Colonic mucosa (tissue), 4 donors: ENCODE measurements at regions of chr2 and their contacts with region 1.

Region 1: DNA sequence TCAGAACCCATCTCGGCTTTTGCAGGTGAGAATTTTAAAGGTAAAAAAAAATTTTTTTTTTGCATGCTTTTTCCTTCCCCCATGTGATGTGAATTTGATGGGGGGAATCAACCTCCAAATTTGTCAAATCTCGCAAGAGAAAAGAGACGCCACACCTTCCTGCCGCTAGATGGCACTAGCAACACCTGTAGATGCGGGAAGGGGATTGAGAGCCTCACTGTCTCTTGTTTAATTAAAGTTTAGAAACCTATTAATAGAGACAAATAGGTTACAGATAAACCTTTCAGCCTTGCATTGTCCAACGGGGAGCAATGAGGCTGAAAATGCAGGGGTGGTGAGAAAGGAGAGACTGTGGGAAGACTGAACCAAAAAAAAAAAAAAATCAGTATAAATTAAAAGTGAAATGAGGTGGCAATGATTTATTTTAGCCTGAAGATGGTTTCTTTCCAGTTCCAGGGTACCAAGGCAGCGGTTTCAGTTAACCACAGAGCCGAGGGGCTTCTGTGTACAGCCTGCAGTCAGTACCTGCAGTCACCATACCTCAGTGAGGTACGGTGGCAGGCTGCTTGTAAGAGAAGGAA is 84.6 kb downstream of the NRP2 start:
- DNase-seq: peak; percentile 70
- H3K4me3 ChIP-seq: no peak overlapping the region
- H3K27ac ChIP-seq: no peak overlapping the region
- H3K4me1 ChIP-seq: peaks cover 7% of the 10 kb centered on the region
- H3K27me3 ChIP-seq: no peaks in the 10 kb centered on the region
- CTCF ChIP-seq: peak; percentile 88

Region 2: DNA sequence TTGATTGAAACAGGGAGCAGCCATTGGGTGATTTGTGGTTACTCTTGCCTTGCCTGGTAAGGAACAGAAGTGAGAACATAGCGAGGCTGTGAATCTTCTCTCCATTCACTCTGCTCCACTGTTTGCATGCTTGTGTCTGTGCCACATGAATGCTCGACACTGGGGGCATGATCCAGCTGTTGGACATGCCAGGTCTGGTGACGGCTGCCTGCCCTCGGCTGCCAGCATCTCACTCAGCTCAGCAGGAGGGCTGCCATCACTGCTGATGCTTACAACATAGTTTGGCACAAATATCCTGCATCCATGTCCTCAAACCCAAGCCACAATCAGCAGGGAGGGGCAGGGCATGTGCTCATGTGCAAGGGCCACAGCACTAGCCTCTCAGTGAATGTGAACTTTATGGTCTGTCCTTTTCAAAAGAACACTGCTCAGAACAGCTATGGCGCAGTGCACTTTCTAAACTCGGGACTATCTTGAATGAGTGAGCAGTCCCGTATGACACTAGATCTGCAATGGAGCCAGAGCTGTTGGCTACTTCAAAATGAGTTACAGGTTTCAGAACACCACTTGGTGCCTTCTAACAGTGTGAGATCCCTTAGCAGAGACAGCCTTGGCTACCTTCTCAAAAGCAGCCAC is 41.7 kb after region 1 on chr2:
- intact Hi-C with region 1: loop called (anchors 2 kb)
- DNase-seq: no peak
- H3K4me3 ChIP-seq: no peak overlapping the region
- H3K27ac ChIP-seq: no peak overlapping the region
- H3K4me1 ChIP-seq: no peaks in the 10 kb centered on the region
- H3K27me3 ChIP-seq: no peaks in the 10 kb centered on the region
- CTCF ChIP-seq: no peak

Region 3: GRCh38 chr2:205885492-205886099 is 118.7 kb after region 1 on chr2:
- intact Hi-C with region 1: loop called (anchors 5 kb)
- DNase-seq: peak; percentile 95
- H3K4me3 ChIP-seq: no peak overlapping the region
- H3K27ac ChIP-seq: no peak overlapping the region
- H3K4me1 ChIP-seq: no peaks in the 10 kb centered on the region
- H3K27me3 ChIP-seq: no peaks in the 10 kb centered on the region
- CTCF ChIP-seq: peak; percentile 77

Region 4: DNA sequence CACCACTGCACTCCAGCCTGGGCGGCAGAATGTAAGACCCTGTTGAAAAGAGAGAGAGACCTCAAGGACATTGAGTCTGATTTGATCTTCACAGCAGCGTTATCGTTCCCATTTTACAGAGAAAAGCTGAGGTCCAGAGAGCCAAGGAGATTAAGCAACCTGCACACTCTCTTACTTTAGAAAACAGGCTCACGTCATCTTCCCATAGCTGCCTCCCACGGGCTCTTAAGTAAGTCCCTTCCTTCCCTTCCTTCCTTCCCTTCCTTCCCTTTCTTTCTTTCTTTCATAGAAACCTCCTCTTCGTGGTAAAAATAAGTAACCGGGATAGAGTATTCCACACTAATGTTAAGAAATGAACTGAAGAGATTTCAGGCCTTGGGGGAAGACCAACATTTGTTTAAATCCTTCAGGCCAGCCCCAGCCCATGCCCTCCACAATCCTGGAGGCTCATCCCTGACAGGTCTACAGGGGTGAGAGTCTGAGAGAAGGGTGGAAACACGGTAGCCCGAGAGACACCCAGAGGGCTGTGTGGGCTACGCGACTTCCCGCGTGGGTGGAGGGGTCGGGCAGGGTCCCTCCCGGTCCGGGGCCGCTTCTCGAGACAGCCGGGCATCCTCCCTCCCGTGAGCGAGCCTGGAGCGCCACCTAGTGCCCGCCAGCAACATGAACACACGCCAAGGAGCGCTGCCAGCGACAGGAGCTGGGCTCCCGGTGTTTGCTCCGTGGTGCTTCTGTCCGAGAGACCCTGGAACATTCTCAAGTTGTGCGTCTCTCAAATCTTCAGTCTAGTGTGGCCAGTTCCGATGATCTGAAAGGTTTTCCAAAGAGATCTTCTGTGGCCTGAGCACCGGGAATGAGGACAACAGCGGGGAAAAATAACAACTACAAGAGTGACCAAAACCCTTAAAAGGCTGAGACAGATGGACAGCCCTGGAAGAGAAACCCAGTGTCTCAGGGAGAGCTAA is 158.8 kb after region 1 on chr2:
- intact Hi-C with region 1: loop called (anchors 10 kb)
- DNase-seq: peak; percentile 83
- H3K4me3 ChIP-seq: no peak overlapping the region
- H3K27ac ChIP-seq: no peak overlapping the region
- H3K4me1 ChIP-seq: peaks cover 4% of the 10 kb centered on the region
- H3K27me3 ChIP-seq: no peaks in the 10 kb centered on the region
- CTCF ChIP-seq: peak; percentile 91

Region 5: DNA sequence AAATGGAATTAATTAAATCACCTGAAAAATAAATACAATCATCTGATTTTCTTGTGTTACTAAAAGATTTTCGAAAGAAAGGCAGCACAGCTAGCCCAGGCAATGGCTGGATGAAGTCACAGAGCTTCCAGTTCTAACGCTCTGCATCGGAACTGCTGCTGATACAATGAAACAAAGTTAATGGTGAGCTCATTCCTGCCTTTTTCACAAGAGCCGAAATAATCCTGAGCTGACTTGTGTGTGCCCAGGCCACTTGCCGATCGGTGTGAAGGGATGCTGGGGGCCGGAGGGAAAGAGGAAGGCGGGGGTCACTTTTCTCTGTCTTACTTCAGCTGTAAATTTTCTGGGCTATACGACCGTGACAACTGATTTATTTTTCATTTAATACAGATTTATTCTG is 169.6 kb after region 1 on chr2:
- intact Hi-C with region 1: no loop called
- DNase-seq: no peak
- H3K4me3 ChIP-seq: no peak overlapping the region
- H3K27ac ChIP-seq: no peak overlapping the region
- H3K4me1 ChIP-seq: no peaks in the 10 kb centered on the region
- H3K27me3 ChIP-seq: no peaks in the 10 kb centered on the region
- CTCF ChIP-seq: no peak